Aorta (tissue), 5 donors: ENCODE measurements at regions of chr10 and their contacts with region 1.

Region 1: GRCh38 chr10:27319752-27320561 is 79.4 kb upstream of the ACBD5 start:
- DNase-seq: peak; percentile 67 to 86
- ATAC-seq: peak; percentile 68
- H3K4me3 ChIP-seq: no peak overlapping the region
- H3K27ac ChIP-seq: no peak overlapping the region
- H3K4me1 ChIP-seq: no peaks in the 10 kb centered on the region
- H3K27me3 ChIP-seq: no peaks in the 10 kb centered on the region

Region 2: GRCh38 chr10:26574783-26575182 is 745.2 kb before region 1 on chr10:
- intact Hi-C with region 1: loop called in 1 of 2 experiments (anchors 5 kb)
- DNase-seq: no peak
- ATAC-seq: no peak
- H3K4me3 ChIP-seq: no peak overlapping the region
- H3K27ac ChIP-seq: no peak overlapping the region
- H3K4me1 ChIP-seq: no peaks in the 10 kb centered on the region
- H3K27me3 ChIP-seq: peaks cover 0 to 1% of the 10 kb centered on the region in 2 donors

Region 3: DNA sequence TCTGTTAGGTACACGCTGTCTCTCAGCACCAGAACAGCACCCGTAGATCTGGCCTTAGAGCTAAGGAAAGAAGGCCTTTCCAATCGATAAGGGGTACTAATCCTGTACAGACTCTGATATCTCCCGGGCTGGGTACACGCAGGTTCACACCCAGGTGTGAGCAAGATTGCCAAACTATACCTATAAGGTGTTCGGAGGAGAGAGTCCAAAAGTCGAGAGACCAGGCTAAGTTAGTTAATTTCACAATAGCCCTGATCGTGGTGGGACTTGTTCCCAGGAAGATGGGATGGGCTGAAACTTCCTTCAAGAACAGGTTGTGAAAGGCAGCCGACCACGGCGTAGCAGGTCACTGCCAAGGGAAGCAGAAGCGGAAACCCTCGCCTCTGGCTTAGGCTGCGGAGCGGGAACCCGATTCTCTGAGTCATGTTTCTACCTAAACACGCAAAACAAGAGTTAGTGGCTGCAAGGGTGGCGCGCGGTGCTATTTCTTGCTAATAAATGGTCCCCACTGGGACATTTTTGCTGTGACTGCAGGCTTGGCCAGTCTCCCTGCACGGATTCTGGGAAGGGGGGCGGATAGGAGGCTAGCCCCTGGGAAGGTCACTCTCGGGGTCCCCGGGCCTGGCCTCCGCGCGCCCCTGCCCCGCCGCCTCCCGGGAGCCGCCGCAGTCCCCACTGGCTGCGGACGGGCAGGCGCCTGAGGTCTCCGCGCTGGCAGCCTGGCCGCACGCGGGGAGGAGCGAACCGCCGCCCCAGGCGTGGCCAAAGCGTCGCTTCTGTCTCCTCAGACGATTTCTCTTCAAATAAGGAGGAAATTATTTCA is 697.9 kb before region 1 on chr10:
- intact Hi-C with region 1: loop called in 1 of 2 experiments (anchors 10 kb)
- DNase-seq: peak; percentile 59 to 78
- ATAC-seq: no peak
- H3K4me3 ChIP-seq: no peak overlapping the region
- H3K27ac ChIP-seq: no peak overlapping the region
- H3K4me1 ChIP-seq: no peaks in the 10 kb centered on the region
- H3K27me3 ChIP-seq: no peaks in the 10 kb centered on the region

Region 4: DNA sequence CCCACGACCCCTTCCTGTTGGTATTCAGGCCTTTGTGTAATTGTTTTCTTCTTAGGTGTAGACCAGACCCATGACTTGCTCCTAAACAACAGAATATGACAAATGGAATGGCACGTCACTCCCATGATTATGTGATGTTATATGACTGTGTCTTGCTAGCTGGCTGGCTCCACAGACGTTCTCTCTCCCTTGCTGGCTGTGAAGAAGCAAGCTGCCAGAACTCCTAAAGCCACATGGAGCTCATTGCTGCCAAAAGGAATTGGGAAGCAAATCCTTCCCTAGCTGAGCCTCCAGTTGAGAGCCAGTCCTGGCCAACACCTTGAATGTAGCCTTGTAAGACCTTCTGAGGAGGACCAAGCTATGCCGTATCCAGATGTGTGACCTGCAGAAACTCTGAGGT is 258.4 kb after region 1 on chr10:
- intact Hi-C with region 1: no loop called
- DNase-seq: no peak
- ATAC-seq: no peak
- H3K4me3 ChIP-seq: no peak overlapping the region
- H3K27ac ChIP-seq: no peak overlapping the region
- H3K4me1 ChIP-seq: no peaks in the 10 kb centered on the region
- H3K27me3 ChIP-seq: no peaks in the 10 kb centered on the region